Endothelial cell of umbilical vein (primary cell): ENCODE measurements at regions of chr10 and their contacts with region 1.

Region 1: DNA sequence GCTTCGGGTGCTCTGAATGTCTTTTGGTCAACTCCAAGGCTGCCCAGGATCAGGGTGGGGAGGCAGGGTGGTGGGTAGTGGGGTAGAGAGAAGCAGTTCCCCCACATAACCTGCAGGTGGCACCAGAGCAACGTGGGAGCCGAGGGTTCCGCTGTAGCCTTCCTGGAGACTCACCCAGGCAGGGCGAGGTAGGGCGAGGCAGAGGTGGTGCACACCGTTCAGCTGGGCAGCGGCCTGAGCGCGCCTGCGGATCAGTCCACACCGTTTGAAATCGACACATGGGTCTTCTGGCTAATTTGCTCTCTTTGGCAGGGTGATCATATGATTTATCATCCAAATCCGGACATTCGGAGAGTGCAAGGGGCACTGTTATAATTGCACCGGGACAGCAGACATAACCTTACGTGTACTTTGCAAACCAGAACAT is 41.4 kb upstream of the MAP3K8 start:
- DNase-seq: peak; percentile 61
- H3K4me3 ChIP-seq: no peak overlapping the region
- H3K27ac ChIP-seq: no peak overlapping the region
- H3K4me1 ChIP-seq: no peaks in the 10 kb centered on the region
- H3K27me3 ChIP-seq: peaks cover 12 to 20% of the 10 kb centered on the region in 2 experiments
- CTCF ChIP-seq: peak; percentile 76 to 95
- POLR2A ChIP-seq: no peak

Region 2: DNA sequence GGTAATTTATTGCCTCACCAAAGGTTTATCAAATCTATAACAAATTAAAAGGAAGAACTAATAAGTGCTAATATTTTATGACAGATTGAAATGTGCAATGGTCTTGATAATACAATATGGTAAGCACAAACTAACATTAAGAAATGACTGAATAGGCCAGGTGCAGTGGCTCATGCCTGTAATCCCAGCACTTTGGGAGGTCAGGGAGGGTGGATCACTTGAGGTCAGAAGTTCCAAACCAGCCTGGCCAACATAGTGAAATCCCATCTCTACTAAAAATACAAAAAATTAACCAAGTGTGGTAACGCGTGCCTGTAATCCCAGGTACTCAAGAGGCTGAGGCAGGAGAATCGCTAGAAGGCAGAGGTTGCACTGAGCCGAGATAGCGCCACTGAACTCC is 47.0 kb before region 1 on chr10:
- CTCF ChIA-PET with region 1: no interaction called
- POLR2A ChIA-PET with region 1: no interaction called
- dilution Hi-C with region 1: no loop called
- intact Hi-C with region 1: no loop called
- DNase-seq: no peak
- H3K4me3 ChIP-seq: no peak overlapping the region
- H3K27ac ChIP-seq: no peak overlapping the region
- H3K4me1 ChIP-seq: peaks cover 9% of the 10 kb centered on the region
- H3K27me3 ChIP-seq: no peaks in the 10 kb centered on the region
- CTCF ChIP-seq: no peak
- POLR2A ChIP-seq: no peak

Region 3: GRCh38 chr10:30413996-30414576 is 21.5 kb after region 1 on chr10:
- CTCF ChIA-PET with region 1: interaction called, 3 read pairs
- POLR2A ChIA-PET with region 1: no interaction called
- dilution Hi-C with region 1: no loop called
- intact Hi-C with region 1: loop called (anchors 1 kb)
- DNase-seq: peak; percentile 69
- H3K4me3 ChIP-seq: no peak overlapping the region
- H3K27ac ChIP-seq: no peak overlapping the region
- H3K4me1 ChIP-seq: peaks cover 2% of the 10 kb centered on the region
- H3K27me3 ChIP-seq: no peaks in the 10 kb centered on the region
- CTCF ChIP-seq: peak; percentile 59 to 64
- POLR2A ChIP-seq: no peak

Region 4: GRCh38 chr10:30534465-30535144 is 142.0 kb after region 1 on chr10:
- CTCF ChIA-PET with region 1: interaction called, 24 read pairs
- POLR2A ChIA-PET with region 1: no interaction called
- dilution Hi-C with region 1: no loop called
- intact Hi-C with region 1: loop called (anchors 1 kb)
- DNase-seq: peak; percentile 66
- H3K4me3 ChIP-seq: no peak overlapping the region
- H3K27ac ChIP-seq: no peak overlapping the region
- H3K4me1 ChIP-seq: peaks cover 10% of the 10 kb centered on the region
- H3K27me3 ChIP-seq: no peaks in the 10 kb centered on the region
- CTCF ChIP-seq: peak; percentile 76 to 81
- POLR2A ChIP-seq: no peak

Region 5: GRCh38 chr10:30583778-30584415 is 191.3 kb after region 1 on chr10:
- CTCF ChIA-PET with region 1: interaction called, 10 read pairs
- POLR2A ChIA-PET with region 1: no interaction called
- dilution Hi-C with region 1: no loop called
- intact Hi-C with region 1: loop called (anchors 2 kb)
- DNase-seq: peak; percentile 96
- H3K4me3 ChIP-seq: peak overlapping the region; percentile 27 to 60 (median 39)
- H3K27ac ChIP-seq: peak overlapping the region; percentile 55
- H3K4me1 ChIP-seq: peaks cover 15% of the 10 kb centered on the region
- H3K27me3 ChIP-seq: peaks cover 0 to 2% of the 10 kb centered on the region in 2 experiments
- CTCF ChIP-seq: no peak
- POLR2A ChIP-seq: no peak

Region 6: GRCh38 chr10:30639946-30640786 is 247.6 kb after region 1 on chr10:
- CTCF ChIA-PET with region 1: interaction called, 20 read pairs
- POLR2A ChIA-PET with region 1: no interaction called
- dilution Hi-C with region 1: no loop called
- intact Hi-C with region 1: loop called (anchors 1 kb)
- DNase-seq: peak; percentile 86
- H3K4me3 ChIP-seq: no peak overlapping the region
- H3K27ac ChIP-seq: peak overlapping the region; percentile 44
- H3K4me1 ChIP-seq: peaks cover 61% of the 10 kb centered on the region
- H3K27me3 ChIP-seq: peaks cover 0 to 1% of the 10 kb centered on the region in 2 experiments
- CTCF ChIP-seq: peak; percentile 64 to 70
- POLR2A ChIP-seq: no peak